ENCODE measurements at regions of chr3 and their contacts with region 1.

Region 1: DNA sequence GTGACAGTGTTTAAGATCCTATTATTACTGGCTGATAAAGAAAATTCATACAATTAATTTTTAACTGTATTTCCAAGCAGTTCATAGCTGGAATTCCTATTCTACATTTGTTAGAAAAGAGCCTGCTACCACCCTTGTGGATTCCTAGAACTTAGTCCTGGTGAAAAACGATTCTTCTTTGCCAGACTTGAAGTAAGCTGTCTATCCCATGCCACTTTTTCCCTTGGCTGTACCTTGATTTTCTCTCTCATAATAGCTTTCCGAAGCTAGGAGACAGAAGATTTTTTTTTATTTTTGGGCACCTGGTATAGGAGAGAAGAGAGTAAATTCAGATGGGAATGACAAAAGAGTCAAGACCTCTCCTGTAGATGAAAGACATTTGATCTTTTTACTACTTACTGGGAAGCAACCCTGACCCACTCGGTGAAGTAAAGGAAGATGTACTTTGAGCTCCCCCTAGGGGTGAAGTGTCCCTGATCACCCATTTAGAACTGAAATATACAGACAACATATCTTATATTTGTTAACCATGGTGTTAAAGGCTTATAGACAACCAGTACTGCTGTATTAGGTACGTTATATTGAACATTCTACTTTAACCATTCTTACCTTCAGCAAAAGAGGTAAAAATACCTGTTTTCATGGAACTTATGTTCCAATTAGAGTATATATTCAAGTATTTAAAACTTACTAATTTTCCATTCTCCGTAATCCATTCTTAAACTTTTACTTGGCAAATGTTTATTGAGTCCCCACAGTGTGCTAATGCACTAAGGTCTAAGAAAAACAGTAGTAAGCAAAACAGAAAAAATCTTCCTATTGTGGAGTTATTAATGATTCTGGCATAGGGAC is 36.2 kb upstream of the C3orf38 start:
- DNase-seq: peak; percentile 35
- ATAC-seq: peak; percentile 99
- H3K4me3 ChIP-seq: no peak overlapping the region
- H3K27ac ChIP-seq: no peak overlapping the region
- H3K4me1 ChIP-seq: no peaks in the 10 kb centered on the region
- H3K27me3 ChIP-seq: no peaks in the 10 kb centered on the region
- CTCF ChIP-seq: peak; percentile 67 to 72 (median 69)
- EP300 ChIP-seq: no peak
- POLR2A ChIP-seq: no peak
- RAD21 ChIP-seq: peak; percentile 77

Region 2: GRCh38 chr3:87771341-87772192 is 342.0 kb before region 1 on chr3:
- CTCF ChIA-PET with region 1: interaction called, 5 read pairs
- POLR2A ChIA-PET with region 1: no interaction called
- RAD21 ChIA-PET with region 1: no interaction called
- SMC1A ChIA-PET with region 1: interaction called, 8 read pairs
- in situ Hi-C with region 1: no loop called
- intact Hi-C with region 1: loop called (anchors 2 kb)
- DNase-seq: peak; percentile 8
- ATAC-seq: peak; percentile 96
- H3K4me3 ChIP-seq: no peak overlapping the region
- H3K27ac ChIP-seq: no peak overlapping the region
- H3K4me1 ChIP-seq: no peaks in the 10 kb centered on the region
- H3K27me3 ChIP-seq: no peaks in the 10 kb centered on the region
- CTCF ChIP-seq: peak; percentile 73 to 87 (median 82)
- EP300 ChIP-seq: no peak
- POLR2A ChIP-seq: no peak
- RAD21 ChIP-seq: peak; percentile 61

Region 3: GRCh38 chr3:88031642-88032077 is 81.9 kb before region 1 on chr3:
- CTCF ChIA-PET with region 1: interaction called, 20 read pairs
- POLR2A ChIA-PET with region 1: no interaction called
- RAD21 ChIA-PET with region 1: interaction called, 7 read pairs
- SMC1A ChIA-PET with region 1: interaction called, 5 read pairs
- in situ Hi-C with region 1: no loop called
- intact Hi-C with region 1: no loop called
- DNase-seq: peak; percentile 26
- ATAC-seq: peak; percentile 92
- H3K4me3 ChIP-seq: peak overlapping the region; percentile 52
- H3K27ac ChIP-seq: peak overlapping the region; percentile 27; the same call in 1 of the 2 replicates
- H3K4me1 ChIP-seq: no peaks in the 10 kb centered on the region
- H3K27me3 ChIP-seq: no peaks in the 10 kb centered on the region
- CTCF ChIP-seq: no peak
- EP300 ChIP-seq: no peak
- POLR2A ChIP-seq: no peak
- RAD21 ChIP-seq: no peak

Region 4: GRCh38 chr3:88090681-88091080 is 22.9 kb before region 1 on chr3:
- CTCF ChIA-PET with region 1: interaction called, 17 read pairs
- POLR2A ChIA-PET with region 1: no interaction called
- RAD21 ChIA-PET with region 1: no interaction called
- SMC1A ChIA-PET with region 1: interaction called, 4 read pairs
- in situ Hi-C with region 1: no loop called
- intact Hi-C with region 1: no loop called
- DNase-seq: no peak
- ATAC-seq: no peak
- H3K4me3 ChIP-seq: no peak overlapping the region
- H3K27ac ChIP-seq: no peak overlapping the region
- H3K4me1 ChIP-seq: no peaks in the 10 kb centered on the region
- H3K27me3 ChIP-seq: no peaks in the 10 kb centered on the region
- CTCF ChIP-seq: no peak
- EP300 ChIP-seq: no peak
- POLR2A ChIP-seq: no peak
- RAD21 ChIP-seq: no peak

Region 5: GRCh38 chr3:88149509-88150362 is 36.2 kb after region 1 on chr3 and contains the start of gene C3orf38:
- CTCF ChIA-PET with region 1: interaction called, 16 read pairs
- POLR2A ChIA-PET with region 1: interaction called, 3 read pairs
- RAD21 ChIA-PET with region 1: interaction called, 5 read pairs
- SMC1A ChIA-PET with region 1: no interaction called
- in situ Hi-C with region 1: no loop called
- intact Hi-C with region 1: no loop called
- DNase-seq: peak; percentile 64
- ATAC-seq: peak; percentile 88
- H3K4me3 ChIP-seq: peak within 1 kb of the TSS; percentile 77
- H3K27ac ChIP-seq: peak within 1 kb of the TSS; percentile 96
- H3K4me1 ChIP-seq: no peaks in the 10 kb centered on the region; the same call in 1 of the 2 replicates
- H3K27me3 ChIP-seq: no peaks in the 10 kb centered on the region
- CTCF ChIP-seq: no peak
- EP300 ChIP-seq: no peak
- POLR2A ChIP-seq: peak; percentile 82
- RAD21 ChIP-seq: no peak
- polyA plus RNA-seq, gene C3orf38: 29.1 to 37.7 TPM

Measured in GM12878 (cell line).